Activated CD4-positive, alpha-beta memory T cell treated with anti-CD3 and anti-CD28 coated beads, Interleukin-2, amount 10 ng/mL, durations not matched to agents 7 days and 5 days (primary cell): ENCODE measurements at regions of chr11 and their contacts with region 1.

Region 1: GRCh38 chr11:46346886-46347636 is at the start of gene DGKZ:
- DNase-seq: peak; percentile 91
- H3K4me3 Mint-ChIP-seq: peak within 1 kb of the TSS; percentile 90
- H3K27ac Mint-ChIP-seq: peak within 1 kb of the TSS; percentile 97
- H3K4me1 Mint-ChIP-seq: peaks cover 66% of the 10 kb centered on the region
- H3K27me3 Mint-ChIP-seq: peaks cover 13% of the 10 kb centered on the region
- total RNA-seq, gene DGKZ: 141 to 143 TPM

Region 2: DNA sequence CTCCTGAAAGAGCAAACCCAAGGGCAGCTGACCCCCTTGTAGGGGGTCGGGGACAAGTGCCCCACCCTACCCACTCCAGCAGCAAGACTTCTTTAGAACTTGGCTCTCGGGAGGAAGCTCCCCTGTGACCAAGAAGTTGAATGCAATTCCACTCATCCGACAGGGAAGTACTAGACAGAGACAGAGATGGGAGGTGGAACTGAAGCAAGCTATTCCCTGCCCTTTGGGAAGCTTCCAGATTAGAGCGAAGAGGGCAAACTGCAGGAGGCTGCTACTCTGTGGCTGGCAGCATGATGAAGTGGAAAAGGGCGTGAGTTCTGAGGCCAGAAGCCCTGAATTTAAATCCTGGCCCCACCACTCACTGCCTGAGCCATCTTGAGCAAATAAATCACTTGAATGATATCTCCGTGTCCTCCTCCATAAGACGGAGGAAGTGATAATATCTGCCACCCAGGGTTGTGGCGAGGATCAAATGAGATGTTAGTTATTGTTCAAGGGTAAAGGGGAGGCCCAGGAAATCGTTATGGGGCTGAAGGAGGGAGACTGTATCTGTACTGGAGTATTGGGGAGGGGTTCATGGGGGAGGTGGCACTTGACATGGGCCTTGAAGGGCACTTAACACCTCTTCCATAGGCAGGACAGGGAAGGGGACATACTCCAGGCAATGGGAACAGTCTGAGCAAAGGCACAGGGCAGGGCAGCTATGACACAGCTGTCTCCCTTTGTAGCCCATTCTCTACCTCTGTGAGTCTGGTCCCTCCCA is 16.0 kb before region 1 on chr11:
- CTCF ChIA-PET with region 1: interaction called, 10 read pairs
- POLR2A ChIA-PET with region 1: interaction called, 11 read pairs
- DNase-seq: peak; percentile 46
- H3K4me3 Mint-ChIP-seq: no peak overlapping the region
- H3K27ac Mint-ChIP-seq: no peak overlapping the region
- H3K4me1 Mint-ChIP-seq: peaks cover 29% of the 10 kb centered on the region
- H3K27me3 Mint-ChIP-seq: peaks cover 61% of the 10 kb centered on the region

Region 3: GRCh38 chr11:46361283-46362155 is 14.5 kb after region 1 on chr11:
- CTCF ChIA-PET with region 1: interaction called, 210 read pairs
- POLR2A ChIA-PET with region 1: interaction called, 143 read pairs
- DNase-seq: peak; percentile 69
- H3K4me3 Mint-ChIP-seq: peak overlapping the region; percentile 67
- H3K27ac Mint-ChIP-seq: peak overlapping the region; percentile 81
- H3K4me1 Mint-ChIP-seq: peaks cover 49% of the 10 kb centered on the region
- H3K27me3 Mint-ChIP-seq: no peaks in the 10 kb centered on the region

Region 4: GRCh38 chr11:46367244-46367915 is 20.3 kb after region 1 on chr11:
- CTCF ChIA-PET with region 1: interaction called, 210 read pairs
- POLR2A ChIA-PET with region 1: interaction called, 143 read pairs
- DNase-seq: peak; percentile 76
- H3K4me3 Mint-ChIP-seq: no peak overlapping the region
- H3K27ac Mint-ChIP-seq: no peak overlapping the region
- H3K4me1 Mint-ChIP-seq: peaks cover 27% of the 10 kb centered on the region
- H3K27me3 Mint-ChIP-seq: no peaks in the 10 kb centered on the region

Region 5: GRCh38 chr11:46404476-46405017 is 57.5 kb after region 1 on chr11:
- CTCF ChIA-PET with region 1: no interaction called
- POLR2A ChIA-PET with region 1: no interaction called
- DNase-seq: no peak
- H3K4me3 Mint-ChIP-seq: no peak overlapping the region
- H3K27ac Mint-ChIP-seq: no peak overlapping the region
- H3K4me1 Mint-ChIP-seq: no peaks in the 10 kb centered on the region
- H3K27me3 Mint-ChIP-seq: no peaks in the 10 kb centered on the region